Activated CD4-positive, alpha-beta T cell treated with anti-CD3 and anti-CD28 coated beads, Interleukin-2, amount 10 ng/mL, durations not matched to agents 7 days and 5 days (primary cell): ENCODE measurements at regions of chr11 and their contacts with region 1.

Region 1: GRCh38 chr11:121464352-121464946 is 11.7 kb upstream of the SORL1-AS1 start:
- DNase-seq: peak; percentile 77
- H3K4me3 Mint-ChIP-seq: peak overlapping the region; percentile 61
- H3K27ac Mint-ChIP-seq: peak overlapping the region; percentile 93
- H3K4me1 Mint-ChIP-seq: peaks cover 97% of the 10 kb centered on the region
- H3K27me3 Mint-ChIP-seq: no peaks in the 10 kb centered on the region

Region 2: DNA sequence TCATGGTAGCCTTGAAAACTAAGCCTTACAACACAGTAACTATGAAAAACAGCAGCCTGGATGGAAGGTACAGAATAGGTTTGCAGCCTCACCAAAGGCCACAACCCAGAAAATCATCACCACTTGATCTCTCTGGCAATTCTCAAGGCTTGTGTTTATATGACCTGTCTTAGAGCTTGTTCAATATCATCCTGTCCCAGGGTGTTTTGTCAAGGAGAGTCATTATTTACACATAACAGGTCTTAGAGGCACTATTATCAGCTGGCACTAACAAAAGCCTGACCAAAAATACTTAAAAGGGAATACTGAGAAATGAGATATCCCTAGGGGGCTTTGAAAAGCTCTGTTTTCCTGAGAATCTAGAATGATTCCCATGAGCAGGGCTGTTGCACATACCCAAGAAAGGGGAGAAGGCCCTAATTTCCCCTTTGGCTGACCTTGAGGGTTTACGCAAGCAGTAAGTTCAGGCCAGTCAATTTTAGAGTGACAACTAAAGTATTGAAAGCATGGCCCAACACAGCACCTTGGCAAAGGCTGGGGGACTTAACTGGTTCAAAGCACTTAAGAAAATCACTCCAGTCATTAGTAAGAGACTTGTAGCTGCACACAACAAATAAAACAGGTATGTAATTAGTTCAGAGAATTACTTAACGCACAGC is 164.0 kb before region 1 on chr11:
- CTCF ChIA-PET with region 1: no interaction called
- POLR2A ChIA-PET with region 1: no interaction called
- DNase-seq: no peak
- H3K4me3 Mint-ChIP-seq: no peak overlapping the region
- H3K27ac Mint-ChIP-seq: no peak overlapping the region
- H3K4me1 Mint-ChIP-seq: peaks cover 22% of the 10 kb centered on the region
- H3K27me3 Mint-ChIP-seq: no peaks in the 10 kb centered on the region

Region 3: GRCh38 chr11:121451986-121452608 is 12.4 kb before region 1 on chr11 and contains the start of gene SORL1:
- CTCF ChIA-PET with region 1: interaction called, 27 read pairs
- POLR2A ChIA-PET with region 1: interaction called, 5 read pairs
- DNase-seq: peak; percentile 76
- H3K4me3 Mint-ChIP-seq: peak within 1 kb of the TSS; percentile 91
- H3K27ac Mint-ChIP-seq: peak within 1 kb of the TSS; percentile 94
- H3K4me1 Mint-ChIP-seq: peaks cover 73% of the 10 kb centered on the region
- H3K27me3 Mint-ChIP-seq: no peaks in the 10 kb centered on the region
- total RNA-seq, gene SORL1: 197 to 207 TPM

Region 4: GRCh38 chr11:121482231-121483129 is 18.0 kb after region 1 on chr11:
- CTCF ChIA-PET with region 1: interaction called, 19 read pairs
- POLR2A ChIA-PET with region 1: interaction called, 9 read pairs
- DNase-seq: peak; percentile 72
- H3K4me3 Mint-ChIP-seq: peak overlapping the region; percentile 64
- H3K27ac Mint-ChIP-seq: peak overlapping the region; percentile 92
- H3K4me1 Mint-ChIP-seq: peaks cover 73% of the 10 kb centered on the region
- H3K27me3 Mint-ChIP-seq: no peaks in the 10 kb centered on the region

Region 5: GRCh38 chr11:121557348-121557747 is 92.9 kb after region 1 on chr11:
- CTCF ChIA-PET with region 1: no interaction called
- POLR2A ChIA-PET with region 1: interaction called, 13 read pairs
- DNase-seq: no peak
- H3K4me3 Mint-ChIP-seq: no peak overlapping the region
- H3K27ac Mint-ChIP-seq: peak overlapping the region; percentile 68
- H3K4me1 Mint-ChIP-seq: peaks cover 15% of the 10 kb centered on the region
- H3K27me3 Mint-ChIP-seq: no peaks in the 10 kb centered on the region

Region 6: GRCh38 chr11:121652982-121653381 is 188.5 kb after region 1 on chr11:
- CTCF ChIA-PET with region 1: no interaction called
- POLR2A ChIA-PET with region 1: no interaction called
- DNase-seq: no peak
- H3K4me3 Mint-ChIP-seq: no peak overlapping the region
- H3K27ac Mint-ChIP-seq: no peak overlapping the region
- H3K4me1 Mint-ChIP-seq: peaks cover 42% of the 10 kb centered on the region
- H3K27me3 Mint-ChIP-seq: peaks cover 5% of the 10 kb centered on the region